ENCODE measurements at regions of chr9 and their contacts with region 1.

Region 1: GRCh38 chr9:127503947-127504782 is 52.9 kb downstream of the LRSAM1 start:
- DNase-seq: peak; percentile 94
- ATAC-seq: peak; percentile 84
- H3K4me3 Mint-ChIP-seq: no peak overlapping the region
- H3K27ac Mint-ChIP-seq: no peak overlapping the region
- H3K4me1 Mint-ChIP-seq: no peaks in the 10 kb centered on the region
- H3K27me3 Mint-ChIP-seq: no peaks in the 10 kb centered on the region
- CTCF ChIP-seq: peak; percentile 89

Region 2: GRCh38 chr9:127489471-127490115 is 14.6 kb before region 1 on chr9:
- CTCF ChIA-PET with region 1: interaction called, 40 read pairs
- POLR2A ChIA-PET with region 1: interaction called, 3 read pairs
- DNase-seq: peak; percentile 79
- ATAC-seq: peak; percentile 98
- H3K4me3 Mint-ChIP-seq: no peak overlapping the region
- H3K27ac Mint-ChIP-seq: peak overlapping the region; percentile 43; the same call in 1 of the 2 replicates
- H3K4me1 Mint-ChIP-seq: peaks cover 5% of the 10 kb centered on the region
- H3K27me3 Mint-ChIP-seq: no peaks in the 10 kb centered on the region
- CTCF ChIP-seq: no peak

Region 3: GRCh38 chr9:127568971-127569885 is 65.1 kb after region 1 on chr9:
- CTCF ChIA-PET with region 1: interaction called, 10 read pairs
- POLR2A ChIA-PET with region 1: interaction called, 3 read pairs
- DNase-seq: peak; percentile 77
- ATAC-seq: peak; percentile 79
- H3K4me3 Mint-ChIP-seq: peak overlapping the region; percentile 71
- H3K27ac Mint-ChIP-seq: no peak overlapping the region
- H3K4me1 Mint-ChIP-seq: peaks cover 26% of the 10 kb centered on the region
- H3K27me3 Mint-ChIP-seq: peaks cover 10% of the 10 kb centered on the region
- CTCF ChIP-seq: no peak

Region 4: GRCh38 chr9:127586537-127586936 is 82.4 kb after region 1 on chr9:
- CTCF ChIA-PET with region 1: interaction called, 44 read pairs
- POLR2A ChIA-PET with region 1: no interaction called
- DNase-seq: peak; percentile 86
- ATAC-seq: peak; percentile 92
- H3K4me3 Mint-ChIP-seq: no peak overlapping the region
- H3K27ac Mint-ChIP-seq: no peak overlapping the region
- H3K4me1 Mint-ChIP-seq: peaks cover 15% of the 10 kb centered on the region
- H3K27me3 Mint-ChIP-seq: no peaks in the 10 kb centered on the region
- CTCF ChIP-seq: peak; percentile 72

Region 5: GRCh38 chr9:127611899-127612790 is 108.0 kb after region 1 on chr9 and contains the start of gene STXBP1:
- CTCF ChIA-PET with region 1: interaction called, 14 read pairs
- POLR2A ChIA-PET with region 1: interaction called, 5 read pairs
- DNase-seq: peak; percentile 90
- ATAC-seq: peak; percentile 74
- H3K4me3 Mint-ChIP-seq: peak within 1 kb of the TSS; percentile 95
- H3K27ac Mint-ChIP-seq: peak within 1 kb of the TSS; percentile 84
- H3K4me1 Mint-ChIP-seq: peaks cover 30% of the 10 kb centered on the region
- H3K27me3 Mint-ChIP-seq: peaks cover 41% of the 10 kb centered on the region
- CTCF ChIP-seq: no peak
- total RNA-seq, gene STXBP1: 37.1 to 45.6 TPM (median 40.3 TPM) in 3 replicates